Activated CD8-positive, alpha-beta T cell treated with anti-CD3 and anti-CD28 coated beads for 36 hours (primary cell): ENCODE measurements at regions of chr6 and their contacts with region 1.

Region 1: GRCh38 chr6:44645276-44645675 is 257.8 kb downstream of the CDC5L start:
- DNase-seq: peak; percentile 13
- ATAC-seq: no peak
- H3K4me3 Mint-ChIP-seq: no peak overlapping the region
- H3K27ac Mint-ChIP-seq: no peak overlapping the region
- H3K4me1 Mint-ChIP-seq: peaks cover 32% of the 10 kb centered on the region
- H3K27me3 Mint-ChIP-seq: peaks cover 3% of the 10 kb centered on the region
- CTCF ChIP-seq: no peak

Region 2: DNA sequence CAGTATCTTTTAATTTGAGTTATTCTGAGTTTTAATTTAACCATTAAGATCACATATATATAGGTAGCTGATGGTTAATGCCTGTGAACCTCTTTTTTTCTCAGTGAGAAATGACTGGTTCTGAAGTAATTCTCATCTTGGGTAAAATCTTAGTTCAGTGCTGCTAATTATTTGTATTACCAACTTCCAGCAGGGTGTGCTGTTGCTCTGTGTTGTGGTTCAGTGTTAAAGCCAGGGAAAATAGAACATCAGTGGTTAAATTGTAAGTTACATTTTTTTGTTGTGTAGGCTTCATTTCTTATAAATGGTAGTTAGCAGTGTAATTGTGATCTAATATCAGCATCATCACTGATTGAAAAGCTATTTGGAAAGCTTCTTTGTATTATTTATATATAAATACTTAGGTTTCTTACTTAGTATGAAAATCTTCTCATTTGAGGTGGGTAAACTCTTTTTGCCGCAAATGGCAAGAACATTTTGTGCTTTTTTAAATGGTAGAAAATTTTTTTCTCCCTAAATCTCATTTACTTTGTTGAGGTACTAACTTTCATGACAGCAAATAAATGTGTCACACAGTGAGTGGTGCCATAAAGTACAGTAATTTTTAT is 214.1 kb before region 1 on chr6:
- CTCF ChIA-PET with region 1: no interaction called
- POLR2A ChIA-PET with region 1: no interaction called
- intact Hi-C with region 1: no loop called
- DNase-seq: peak; percentile 63
- ATAC-seq: peak; percentile 66
- H3K4me3 Mint-ChIP-seq: no peak overlapping the region
- H3K27ac Mint-ChIP-seq: no peak overlapping the region
- H3K4me1 Mint-ChIP-seq: peaks cover 13% of the 10 kb centered on the region
- H3K27me3 Mint-ChIP-seq: no peaks in the 10 kb centered on the region
- CTCF ChIP-seq: peak; percentile 70

Region 3: DNA sequence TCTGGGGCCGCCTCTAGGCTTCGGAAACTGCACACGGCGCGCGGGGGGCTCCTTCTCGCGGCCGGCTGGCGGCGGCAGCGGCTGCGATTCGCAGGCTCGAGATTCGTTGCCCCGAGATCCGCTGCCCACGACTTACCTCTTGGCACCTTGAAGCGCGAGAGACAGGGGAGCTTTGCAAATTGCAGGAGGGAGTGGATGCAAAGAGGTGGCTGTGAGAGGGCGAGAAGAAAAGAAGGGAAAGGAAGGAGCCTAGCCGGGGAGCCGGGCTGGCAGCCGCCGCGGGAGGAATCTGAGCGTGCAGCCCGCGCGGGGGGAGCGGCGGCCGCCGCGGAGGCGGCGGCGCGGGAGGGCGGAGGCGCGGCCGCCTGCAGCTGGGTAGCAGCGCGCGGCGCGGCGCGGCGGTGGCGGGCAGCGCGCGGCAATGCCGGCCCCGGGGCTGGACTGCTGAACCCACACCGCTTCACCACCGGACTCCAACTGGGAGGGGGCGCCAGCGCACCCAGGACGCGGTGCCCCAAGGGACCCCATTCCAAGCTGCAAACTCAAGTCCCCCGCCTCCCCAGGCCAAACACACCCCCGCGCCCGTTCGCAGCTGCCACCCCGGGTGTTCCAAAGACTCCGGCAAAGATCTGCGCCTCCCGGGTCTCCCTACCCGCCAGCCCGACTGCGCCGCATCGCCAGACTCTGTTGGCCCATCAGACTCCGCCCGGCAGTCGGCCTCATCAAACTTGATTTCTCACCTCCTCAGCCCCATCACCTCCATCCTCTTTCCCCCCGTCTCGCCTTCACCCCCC is 776.6 kb after region 1 on chr6:
- CTCF ChIA-PET with region 1: no interaction called
- POLR2A ChIA-PET with region 1: no interaction called
- intact Hi-C with region 1: loop called (anchors 5 kb)
- DNase-seq: peak; percentile 71
- ATAC-seq: peak; percentile 25
- H3K4me3 Mint-ChIP-seq: peak overlapping the region; percentile 94
- H3K27ac Mint-ChIP-seq: peak overlapping the region; percentile 95
- H3K4me1 Mint-ChIP-seq: peaks cover 29% of the 10 kb centered on the region
- H3K27me3 Mint-ChIP-seq: no peaks in the 10 kb centered on the region
- CTCF ChIP-seq: no peak